ENCODE measurements at regions of chr12 and their contacts with region 1.

Region 1: DNA sequence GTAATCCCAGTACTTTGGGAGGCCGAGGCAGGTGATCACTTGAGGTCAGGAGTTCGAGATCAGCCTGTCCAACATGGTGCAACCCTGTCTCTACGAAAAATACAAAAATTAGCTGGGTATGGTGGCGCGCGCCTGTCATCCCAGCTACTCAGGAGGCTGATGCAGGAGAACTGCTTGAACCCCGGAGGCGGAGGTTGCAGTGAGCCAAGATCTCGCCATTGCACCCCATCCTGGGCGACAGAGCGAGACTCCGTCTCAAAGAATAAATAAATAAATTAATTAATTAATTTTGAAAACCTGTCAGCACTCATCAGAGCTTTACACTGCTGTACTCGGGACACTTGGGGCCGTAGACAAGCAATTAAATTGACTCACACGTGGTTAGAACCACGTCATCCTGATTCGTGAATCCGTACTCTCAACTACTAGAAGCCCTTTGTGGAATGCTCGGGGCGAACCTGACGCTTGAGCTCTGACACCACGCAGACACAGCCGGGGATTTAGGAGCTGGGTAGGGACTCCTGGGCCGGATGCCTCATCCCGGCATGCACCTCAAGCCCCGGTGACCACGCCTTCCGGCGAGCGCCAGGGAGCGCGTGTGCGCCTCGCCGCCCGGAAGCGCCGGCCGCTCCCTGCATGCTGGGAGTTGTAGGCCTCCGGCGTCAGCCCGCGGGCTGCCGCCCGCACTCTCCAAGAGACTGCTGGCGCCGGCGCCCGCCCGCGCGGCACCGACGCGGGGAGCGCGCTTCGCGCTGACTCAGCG is at the start of gene XPOT:
- DNase-seq: peak; percentile 97
- H3K4me3 ChIP-seq: peak within 1 kb of the TSS; percentile 98
- H3K27ac ChIP-seq: peak within 1 kb of the TSS; percentile 89
- H3K4me1 ChIP-seq: peaks cover 21% of the 10 kb centered on the region
- CTCF ChIP-seq: no peak
- total RNA-seq, gene XPOT: 86.8 and 101 TPM in 2 replicates

Region 2: GRCh38 chr12:63779498-63780481 is 624.1 kb before region 1 on chr12 and contains the start of gene RXYLT1:
- CTCF ChIA-PET with region 1: no interaction called
- POLR2A ChIA-PET with region 1: no interaction called
- intact Hi-C with region 1: loop called (anchors 2 kb)
- DNase-seq: peak; percentile 85
- H3K4me3 ChIP-seq: peak within 1 kb of the TSS; percentile 98
- H3K27ac ChIP-seq: peak within 1 kb of the TSS; percentile 64
- H3K4me1 ChIP-seq: peaks cover 13% of the 10 kb centered on the region
- CTCF ChIP-seq: no peak
- total RNA-seq, gene RXYLT1: 10.7 and 15.7 TPM in 2 replicates

Region 3: GRCh38 chr12:64222009-64222765 is 181.7 kb before region 1 on chr12 and contains the start of gene KICS2:
- CTCF ChIA-PET with region 1: no interaction called
- POLR2A ChIA-PET with region 1: no interaction called
- intact Hi-C with region 1: loop called (anchors 2 kb)
- DNase-seq: peak; percentile 96
- H3K4me3 ChIP-seq: peak within 1 kb of the TSS; percentile 85
- H3K27ac ChIP-seq: peak within 1 kb of the TSS; percentile 42
- H3K4me1 ChIP-seq: peaks cover 24% of the 10 kb centered on the region
- CTCF ChIP-seq: no peak
- total RNA-seq, gene KICS2: 16.2 and 20.6 TPM in 2 replicates

Region 4: GRCh38 chr12:64451687-64452558 is 48.0 kb after region 1 on chr12 and contains the start of gene TBK1:
- CTCF ChIA-PET with region 1: no interaction called
- POLR2A ChIA-PET with region 1: interaction called, 3 read pairs
- intact Hi-C with region 1: loop called (anchors 1 kb)
- DNase-seq: peak; percentile 90
- H3K4me3 ChIP-seq: peak within 1 kb of the TSS; percentile 100
- H3K27ac ChIP-seq: peak within 1 kb of the TSS; percentile 70
- H3K4me1 ChIP-seq: peaks cover 25% of the 10 kb centered on the region
- CTCF ChIP-seq: no peak
- total RNA-seq, gene TBK1: 22.7 and 26.1 TPM in 2 replicates